PC-9 (cell line): ENCODE measurements at regions of chr6 and their contacts with region 1.

Region 1: GRCh38 chr6:119894811-119895210 is 545.2 kb upstream of the MAN1A1 start:
- DNase-seq: no peak
- H3K4me3 ChIP-seq: no peak overlapping the region
- H3K27ac ChIP-seq: no peak overlapping the region
- H3K4me1 ChIP-seq: peaks cover 16% of the 10 kb centered on the region
- H3K27me3 ChIP-seq: no peaks in the 10 kb centered on the region
- CTCF ChIP-seq: no peak

Region 2: GRCh38 chr6:119961450-119961849 is 66.6 kb after region 1 on chr6:
- CTCF ChIA-PET with region 1: no interaction called
- POLR2A ChIA-PET with region 1: interaction called, 18 read pairs
- intact Hi-C with region 1: no loop called
- DNase-seq: no peak
- H3K4me3 ChIP-seq: no peak overlapping the region
- H3K27ac ChIP-seq: no peak overlapping the region
- H3K4me1 ChIP-seq: no peaks in the 10 kb centered on the region
- H3K27me3 ChIP-seq: no peaks in the 10 kb centered on the region
- CTCF ChIP-seq: no peak